Ovary (tissue), 10 donors: ENCODE measurements at regions of chr15 and their contacts with region 1.

Region 1: GRCh38 chr15:31365655-31366127 is 39.1 kb downstream of the KLF13 start:
- DNase-seq: peak; percentile 82 to 98 (median 92)
- H3K4me3 ChIP-seq: peak overlapping the region; percentile 29
- H3K27ac ChIP-seq: peak overlapping the region; percentile 63 to 79
- H3K4me1 ChIP-seq: peaks cover 12% of the 10 kb centered on the region
- H3K27me3 ChIP-seq: no peaks in the 10 kb centered on the region
- CTCF ChIP-seq: peak; percentile 9 to 48 (median 40)
- EP300 ChIP-seq: peak; percentile 100
- POLR2A ChIP-seq: peak; percentile 49

Region 2: DNA sequence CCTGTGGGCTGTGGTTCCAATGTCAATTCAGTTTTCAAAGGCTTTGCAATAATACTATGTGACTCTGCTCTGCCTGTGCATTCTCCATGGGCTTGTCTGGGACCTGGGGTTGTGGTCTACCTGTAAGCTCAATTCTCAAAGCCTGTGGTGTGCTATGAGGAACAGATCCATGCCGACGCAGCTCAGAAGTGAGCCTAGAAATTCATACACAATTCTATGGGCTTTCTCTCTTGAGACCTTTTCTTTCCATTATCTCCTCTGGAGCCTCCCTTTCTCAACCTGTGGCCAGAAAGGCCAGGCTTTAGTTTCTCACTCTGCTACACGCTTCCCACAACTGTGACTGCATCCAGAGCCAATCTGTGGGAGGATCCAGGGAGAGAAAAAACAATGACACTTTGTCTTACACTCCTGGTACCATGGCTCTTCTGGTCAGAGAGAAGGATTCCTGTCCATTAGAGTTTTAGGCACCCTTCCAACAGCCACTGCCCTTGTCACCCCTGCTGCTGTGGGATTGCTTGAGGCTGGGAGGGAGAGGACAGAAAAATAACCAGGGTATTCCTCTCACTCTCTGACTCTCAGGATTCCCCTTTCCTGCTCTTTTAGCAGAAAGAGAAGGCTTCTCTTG is 73.2 kb before region 1 on chr15:
- intact Hi-C with region 1: no loop called
- DNase-seq: no peak
- H3K4me3 ChIP-seq: no peak overlapping the region
- H3K27ac ChIP-seq: no peak overlapping the region
- H3K4me1 ChIP-seq: peaks cover 1% of the 10 kb centered on the region
- H3K27me3 ChIP-seq: no peaks in the 10 kb centered on the region
- CTCF ChIP-seq: no peak
- EP300 ChIP-seq: no peak
- POLR2A ChIP-seq: no peak

Region 3: GRCh38 chr15:31326156-31326732 is 39.4 kb before region 1 on chr15:
- intact Hi-C with region 1: loop called in 3 of 4 experiments (anchors 5 kb)
- DNase-seq: peak; percentile 93 to 100 (median 99)
- H3K4me3 ChIP-seq: peak overlapping the region; percentile 50
- H3K27ac ChIP-seq: peak overlapping the region; percentile 96 to 97
- H3K4me1 ChIP-seq: peaks cover 6% of the 10 kb centered on the region
- H3K27me3 ChIP-seq: no peaks in the 10 kb centered on the region
- CTCF ChIP-seq: peak in 2 of 3 donors; percentile 20 to 39
- EP300 ChIP-seq: peak; percentile 56
- POLR2A ChIP-seq: peak; percentile 94

Region 4: DNA sequence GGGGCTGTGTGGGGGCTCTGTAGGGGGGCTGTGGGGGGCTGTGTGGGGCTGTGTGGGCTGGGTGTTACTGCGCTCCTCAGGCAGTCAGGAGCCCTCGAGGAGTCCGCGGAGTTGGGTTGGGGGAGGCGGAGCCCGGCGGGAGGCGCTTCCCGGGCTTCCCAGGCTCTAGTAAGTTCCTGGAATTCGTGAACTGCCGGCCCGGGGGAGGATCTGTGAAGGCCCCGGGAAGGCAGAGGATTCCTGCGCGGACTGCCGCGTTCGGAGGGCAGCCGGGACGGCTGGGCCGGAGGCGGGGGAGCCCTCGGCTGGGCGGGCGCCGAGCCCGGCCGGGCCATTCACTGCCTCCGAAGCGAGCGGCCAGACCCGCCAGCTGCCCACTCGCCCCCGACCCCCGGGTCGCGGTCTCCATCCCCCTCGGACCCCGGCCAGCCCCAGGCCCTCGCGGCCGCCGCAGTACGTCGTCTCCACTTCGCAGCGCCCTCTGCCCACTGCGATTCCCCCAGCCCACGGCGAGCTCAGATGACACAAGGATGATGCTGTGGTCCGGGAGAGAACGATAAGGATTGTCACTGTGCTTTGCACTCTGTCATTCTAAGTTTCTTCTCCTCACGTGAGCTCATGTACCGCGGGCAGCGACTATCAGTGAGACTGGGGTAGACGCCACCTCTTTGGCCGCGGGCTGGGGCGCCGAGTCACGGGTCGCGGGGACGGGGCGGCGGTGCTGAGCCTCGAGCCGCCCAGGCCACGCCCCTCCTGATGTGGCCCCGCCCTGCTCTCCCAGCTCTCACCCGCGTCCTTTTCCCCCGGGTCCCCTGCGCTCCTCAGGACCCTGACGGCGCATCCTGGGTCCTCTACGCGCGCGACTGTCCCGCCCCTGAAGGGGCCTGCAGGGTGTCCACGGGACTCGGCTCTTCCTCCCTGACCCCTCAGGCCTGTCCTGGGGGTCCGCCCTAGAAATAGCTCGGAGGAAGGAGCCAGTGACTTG is 26.3 kb after region 1 on chr15:
- intact Hi-C with region 1: loop called in 1 of 4 experiments (anchors 2 kb)
- DNase-seq: peak; percentile 64 to 91 (median 80)
- H3K4me3 ChIP-seq: peak overlapping the region; percentile 55
- H3K27ac ChIP-seq: peak overlapping the region; percentile 62 to 78
- H3K4me1 ChIP-seq: peaks cover 4% of the 10 kb centered on the region
- H3K27me3 ChIP-seq: no peaks in the 10 kb centered on the region
- CTCF ChIP-seq: no peak
- EP300 ChIP-seq: peak; percentile 26
- POLR2A ChIP-seq: peak; percentile 86

Region 5: DNA sequence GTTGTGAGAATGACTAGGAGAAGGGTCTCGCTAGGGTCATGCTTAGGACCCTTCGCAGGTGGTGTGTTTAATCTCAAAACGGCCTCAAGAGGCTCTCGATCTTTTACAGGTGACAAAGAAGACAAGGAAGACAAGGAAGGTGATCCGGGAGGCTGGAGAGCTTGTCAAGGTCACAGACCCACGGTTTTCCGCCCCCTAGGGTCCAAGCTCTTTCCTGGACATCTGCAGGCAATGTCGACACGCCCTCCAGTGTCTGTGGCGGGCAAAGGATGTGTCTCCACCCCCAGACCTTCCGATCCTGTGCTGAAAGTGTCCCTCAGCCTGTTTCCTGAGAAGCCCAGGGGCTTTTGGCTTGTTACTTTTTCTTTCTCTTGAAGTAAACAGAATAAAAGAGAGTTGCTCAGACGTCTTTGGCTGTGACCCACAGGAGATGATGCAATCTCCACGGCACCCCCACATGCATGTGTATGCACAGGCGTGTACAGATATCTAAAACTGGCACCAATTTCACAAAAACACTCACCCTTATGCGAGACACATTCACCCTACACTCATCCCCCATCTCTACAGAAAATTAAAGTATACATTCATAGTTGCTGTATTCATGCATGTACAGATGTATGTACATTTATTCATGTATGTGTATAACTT is 69.7 kb after region 1 on chr15:
- intact Hi-C with region 1: loop called in 2 of 4 experiments (anchors 5 kb)
- DNase-seq: peak; percentile 57 to 88 (median 73)
- H3K4me3 ChIP-seq: no peak overlapping the region
- H3K27ac ChIP-seq: peak overlapping the region in 1 of 2 donors; percentile 36
- H3K4me1 ChIP-seq: peaks cover 2% of the 10 kb centered on the region
- H3K27me3 ChIP-seq: no peaks in the 10 kb centered on the region
- CTCF ChIP-seq: peak in 2 of 3 donors; percentile 58 to 65
- EP300 ChIP-seq: no peak
- POLR2A ChIP-seq: no peak